ENCODE measurements at regions of chr1 and their contacts with region 1.

Region 1: DNA sequence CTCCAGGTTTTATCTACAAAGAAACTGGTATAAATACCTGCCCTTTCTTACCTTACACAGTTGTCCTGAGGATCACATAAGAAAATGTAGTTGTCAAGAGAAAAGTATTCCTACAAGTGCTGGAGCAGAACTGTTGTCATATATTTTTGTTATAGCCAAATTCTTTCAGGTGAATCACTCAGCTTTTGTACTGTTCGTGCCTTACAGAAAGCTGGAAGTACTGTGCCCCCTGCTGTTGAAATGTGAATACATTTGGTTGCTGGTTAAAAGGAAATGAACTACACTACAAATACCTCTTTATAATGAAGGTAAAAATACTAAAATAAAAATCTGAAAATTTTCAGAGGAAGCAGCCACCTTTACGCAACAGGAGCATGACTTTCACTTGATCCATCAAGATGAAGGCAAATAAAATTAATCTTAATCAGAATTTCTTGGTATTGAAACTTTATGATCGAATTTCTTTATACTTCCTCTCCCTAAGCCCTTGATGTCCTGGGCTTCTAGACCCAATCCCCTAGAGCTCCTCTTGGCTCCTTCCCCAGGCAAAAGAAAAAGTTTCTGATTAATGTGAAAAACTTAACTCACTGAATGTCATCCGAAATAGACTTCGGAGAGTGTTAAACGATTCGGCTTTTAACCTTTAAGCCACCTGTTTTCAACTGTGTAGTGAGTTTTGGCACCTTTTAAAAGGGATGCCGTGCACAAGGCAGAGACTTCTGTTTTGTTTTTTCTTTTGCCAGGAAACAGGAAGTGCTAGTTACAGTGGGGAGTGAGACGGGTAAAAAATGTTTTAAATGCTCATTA is 12.5 kb downstream of the CHML start:
- DNase-seq: peak; percentile 35
- ATAC-seq: peak; percentile 92
- H3K4me3 ChIP-seq: peak overlapping the region; percentile 12; the same call in 1 of the 2 replicates
- H3K27ac ChIP-seq: peak overlapping the region; percentile 66
- H3K4me1 ChIP-seq: peaks cover 3% of the 10 kb centered on the region
- H3K27me3 ChIP-seq: no peaks in the 10 kb centered on the region
- CTCF ChIP-seq: peak; percentile 50 to 66 (median 64); a peak in 5 of 6 replicates
- EP300 ChIP-seq: no peak
- POLR2A ChIP-seq: no peak
- RAD21 ChIP-seq: peak; percentile 80

Region 2: GRCh38 chr1:241810769-241811405 is 183.2 kb after region 1 on chr1:
- CTCF ChIA-PET with region 1: no interaction called
- POLR2A ChIA-PET with region 1: interaction called, 10 read pairs
- RAD21 ChIA-PET with region 1: no interaction called
- SMC1A ChIA-PET with region 1: no interaction called
- in situ Hi-C with region 1: no loop called
- intact Hi-C with region 1: no loop called
- DNase-seq: peak; percentile 24
- ATAC-seq: peak; percentile 91
- H3K4me3 ChIP-seq: no peak overlapping the region
- H3K27ac ChIP-seq: no peak overlapping the region
- H3K4me1 ChIP-seq: no peaks in the 10 kb centered on the region
- H3K27me3 ChIP-seq: no peaks in the 10 kb centered on the region
- CTCF ChIP-seq: no peak
- EP300 ChIP-seq: peak; percentile 76 to 87; a peak in 3 of 4 replicates
- POLR2A ChIP-seq: no peak
- RAD21 ChIP-seq: no peak